ENCODE measurements at regions of chr7 and their contacts with region 1.

Region 1: DNA sequence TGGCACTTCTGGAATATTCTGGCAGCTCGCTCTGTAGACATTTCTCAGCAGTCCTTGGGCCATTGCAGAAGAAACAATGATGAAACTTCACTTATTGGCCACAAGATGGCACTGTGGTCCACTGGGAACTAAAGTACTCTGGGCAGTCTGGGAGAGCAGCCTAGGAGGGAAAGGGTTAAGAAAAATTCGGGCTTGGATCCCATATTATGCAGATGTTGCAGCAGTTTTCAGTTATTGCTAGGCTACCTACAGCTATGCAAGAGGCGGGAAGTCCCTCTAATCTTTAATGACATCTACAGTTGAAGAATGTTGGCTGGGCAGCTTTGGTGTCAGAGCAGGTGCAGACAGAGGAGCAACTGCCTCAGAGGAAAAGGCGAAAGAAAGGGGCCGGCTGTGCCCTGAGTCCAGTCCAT is 201.7 kb upstream of the PRSS58 start:
- DNase-seq: peak; percentile 37
- H3K4me3 Mint-ChIP-seq: no peak overlapping the region
- H3K27ac Mint-ChIP-seq: no peak overlapping the region
- H3K4me1 Mint-ChIP-seq: peaks cover 50% of the 10 kb centered on the region
- H3K27me3 Mint-ChIP-seq: peaks cover 6% of the 10 kb centered on the region

Region 2: DNA sequence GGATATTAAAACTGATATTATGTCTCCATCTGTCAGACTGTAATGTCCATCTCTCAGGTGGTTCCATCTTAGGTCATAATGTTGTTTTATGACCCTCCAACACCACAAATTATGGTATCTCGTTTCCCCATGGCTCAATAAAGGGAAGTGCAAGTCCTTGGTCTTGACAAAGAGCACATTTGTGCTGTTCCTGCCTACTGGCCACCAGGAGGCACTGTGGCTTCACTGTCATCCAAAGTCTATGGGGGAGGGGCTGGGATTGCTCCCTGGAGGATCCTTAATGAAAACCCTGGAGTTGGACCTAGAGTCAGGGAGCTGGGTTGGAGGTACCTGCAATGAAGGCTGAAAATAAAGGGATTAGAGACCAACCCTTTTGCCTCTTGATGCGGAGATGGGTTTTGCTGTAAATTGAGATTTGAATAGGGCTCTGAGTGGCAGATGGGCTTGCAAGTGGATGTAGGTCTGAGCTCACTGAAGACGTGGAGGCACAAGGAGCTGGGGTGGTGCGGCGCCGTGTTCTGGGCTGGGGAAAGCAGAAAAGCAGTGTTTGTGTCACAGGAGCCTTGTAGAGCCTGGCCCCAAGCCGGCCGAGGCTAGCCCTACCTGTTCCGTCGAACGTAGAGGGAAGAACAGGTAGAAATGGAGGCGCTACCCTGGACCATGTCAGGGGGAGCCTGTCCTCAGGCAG is 21.2 kb before region 1 on chr7:
- CTCF ChIA-PET with region 1: interaction called, 34 read pairs
- POLR2A ChIA-PET with region 1: interaction called, 4 read pairs
- DNase-seq: peak; percentile 43
- H3K4me3 Mint-ChIP-seq: no peak overlapping the region
- H3K27ac Mint-ChIP-seq: no peak overlapping the region
- H3K4me1 Mint-ChIP-seq: peaks cover 66% of the 10 kb centered on the region
- H3K27me3 Mint-ChIP-seq: no peaks in the 10 kb centered on the region

Region 3: GRCh38 chr7:142445019-142445686 is 14.4 kb before region 1 on chr7:
- CTCF ChIA-PET with region 1: interaction called, 34 read pairs
- POLR2A ChIA-PET with region 1: interaction called, 4 read pairs
- DNase-seq: peak; percentile 48
- H3K4me3 Mint-ChIP-seq: no peak overlapping the region
- H3K27ac Mint-ChIP-seq: no peak overlapping the region
- H3K4me1 Mint-ChIP-seq: peaks cover 37% of the 10 kb centered on the region
- H3K27me3 Mint-ChIP-seq: peaks cover 8% of the 10 kb centered on the region

Region 4: GRCh38 chr7:142496545-142497041 is 37.0 kb after region 1 on chr7:
- CTCF ChIA-PET with region 1: interaction called, 18 read pairs
- POLR2A ChIA-PET with region 1: interaction called, 4 read pairs
- DNase-seq: no peak
- H3K4me3 Mint-ChIP-seq: no peak overlapping the region
- H3K27ac Mint-ChIP-seq: no peak overlapping the region
- H3K4me1 Mint-ChIP-seq: peaks cover 29% of the 10 kb centered on the region
- H3K27me3 Mint-ChIP-seq: no peaks in the 10 kb centered on the region

Measured in activated CD4-positive, alpha-beta memory T cell treated with anti-CD3 and anti-CD28 coated beads, Interleukin-2, amount 10 ng/mL, durations not matched to agents 7 days and 5 days (primary cell).